Activated CD4-positive, alpha-beta T cell treated with anti-CD3 and anti-CD28 coated beads, Interleukin-2, amount 10 ng/mL, durations not matched to agents 7 days and 5 days (primary cell): ENCODE measurements at regions of chr1 and their contacts with region 1.

Region 1: DNA sequence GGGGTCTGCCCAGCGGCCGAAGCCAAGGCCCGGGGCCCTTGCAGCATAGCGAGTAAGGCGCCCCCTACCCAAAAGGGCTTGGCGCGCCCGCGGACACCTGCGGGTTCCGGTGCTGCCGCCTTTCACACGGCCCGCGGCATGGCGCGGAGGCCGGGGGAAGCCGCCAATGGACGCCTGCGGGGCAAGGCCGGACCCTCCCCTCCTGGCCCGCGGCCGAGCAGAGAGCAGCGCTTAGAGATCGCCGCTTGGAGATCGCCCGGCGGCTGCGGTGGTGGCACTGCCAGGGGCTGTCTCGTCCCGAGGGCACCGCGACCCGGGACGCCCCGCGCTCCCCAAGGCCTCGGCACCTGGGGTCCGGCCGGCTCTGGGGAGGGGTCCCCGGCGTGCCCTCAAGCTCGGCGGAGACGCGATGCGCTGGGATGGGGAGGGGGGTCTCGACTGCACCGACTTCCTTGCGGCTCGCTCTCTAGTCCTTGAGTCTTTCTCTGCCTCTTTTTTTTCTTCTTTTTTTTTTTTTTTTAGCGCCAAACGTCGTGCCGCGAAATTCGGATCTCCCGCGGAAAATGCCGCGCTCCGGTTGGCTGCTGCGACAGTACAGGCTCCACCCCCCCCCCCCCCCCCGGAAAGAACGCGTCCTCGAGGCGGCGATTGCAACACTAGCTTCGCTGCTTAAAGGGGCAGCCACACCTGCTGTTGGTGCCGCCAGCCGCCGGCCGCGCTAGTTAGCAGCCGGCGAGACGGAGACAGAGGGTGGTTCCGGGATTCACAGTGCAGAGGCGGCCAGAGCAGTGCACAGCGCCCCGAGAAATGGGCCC is at the start of gene E2F2:
- DNase-seq: peak; percentile 88
- H3K4me3 Mint-ChIP-seq: peak within 1 kb of the TSS; percentile 98
- H3K27ac Mint-ChIP-seq: peak within 1 kb of the TSS; percentile 95
- H3K4me1 Mint-ChIP-seq: peaks cover 76% of the 10 kb centered on the region
- H3K27me3 Mint-ChIP-seq: no peaks in the 10 kb centered on the region
- total RNA-seq, gene E2F2: 107 to 112 TPM

Region 2: GRCh38 chr1:23514111-23514679 is 16.8 kb before region 1 on chr1:
- CTCF ChIA-PET with region 1: interaction called, 10 read pairs
- POLR2A ChIA-PET with region 1: interaction called, 5 read pairs
- DNase-seq: no peak
- H3K4me3 Mint-ChIP-seq: no peak overlapping the region
- H3K27ac Mint-ChIP-seq: peak overlapping the region; percentile 58
- H3K4me1 Mint-ChIP-seq: peaks cover 5% of the 10 kb centered on the region
- H3K27me3 Mint-ChIP-seq: no peaks in the 10 kb centered on the region